Sigmoid colon (tissue), 7 donors: ENCODE measurements at regions of chr17 and their contacts with region 1.

Region 1: DNA sequence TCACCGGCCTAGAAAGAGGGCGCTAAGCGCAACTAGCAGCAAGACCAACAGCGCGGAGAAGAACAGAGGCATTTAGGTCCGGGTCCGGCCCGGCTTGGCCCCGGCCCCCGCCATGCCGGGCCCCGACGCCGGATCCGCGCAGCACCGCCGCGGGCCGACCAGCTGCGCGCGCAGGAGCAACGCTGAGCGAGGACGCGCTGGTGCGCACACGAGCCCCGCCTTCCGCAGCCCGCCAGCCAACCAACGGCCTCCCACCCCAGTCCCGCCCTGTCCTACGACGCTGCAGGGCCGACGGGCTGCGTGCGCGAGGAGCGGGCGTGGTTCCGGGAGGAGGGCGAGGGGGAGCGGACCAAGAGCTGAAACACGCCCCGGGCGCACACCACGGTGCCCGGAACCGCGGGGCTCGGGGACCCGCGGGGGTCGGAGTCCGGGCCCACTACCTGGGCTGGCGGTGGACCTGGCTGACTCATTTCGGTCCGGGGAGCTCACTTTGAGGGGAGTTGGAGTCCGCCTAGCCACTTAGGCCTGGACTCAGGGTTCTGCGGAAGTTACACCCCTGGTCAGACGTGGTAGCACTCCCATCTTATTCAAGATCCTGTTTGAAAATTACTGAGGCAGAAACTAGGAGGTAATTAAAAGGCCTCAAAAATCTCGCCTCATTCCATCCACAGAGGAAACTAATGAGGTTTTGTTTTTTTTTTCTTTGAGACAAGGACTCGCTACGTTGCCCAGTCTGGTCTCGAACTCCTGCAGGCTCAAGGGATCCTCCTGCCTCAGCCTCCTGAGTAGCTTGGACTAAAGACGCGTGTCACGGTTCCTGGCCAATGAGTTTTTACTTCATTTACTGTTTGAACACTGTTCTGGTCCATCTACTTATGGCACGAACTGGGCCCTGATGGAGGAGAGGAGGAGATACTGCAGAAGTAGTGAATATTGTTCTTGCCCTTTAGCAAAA is at the start of gene BLTP2:
- DNase-seq: peak; percentile 98
- H3K4me3 ChIP-seq: peak within 1 kb of the TSS; percentile 94 to 99 (median 98)
- H3K27ac ChIP-seq: peak within 1 kb of the TSS; percentile 91 to 97 (median 95)
- H3K4me1 ChIP-seq: peaks cover 0 to 40% (median 32%) of the 10 kb centered on the region in 4 donors
- H3K27me3 ChIP-seq: no peaks in the 10 kb centered on the region
- CTCF ChIP-seq: peak in 1 of 4 experiments; percentile 37
- EP300 ChIP-seq: no peak
- POLR2A ChIP-seq: peak; percentile 68 to 88
- total RNA-seq, gene BLTP2: 71.0 to 84.5 (median 80.3) TPM

Region 2: GRCh38 chr17:28240991-28241340 is 404.3 kb before region 1 on chr17:
- intact Hi-C with region 1: no loop called
- DNase-seq: no peak
- H3K4me3 ChIP-seq: no peak overlapping the region
- H3K27ac ChIP-seq: no peak overlapping the region
- H3K4me1 ChIP-seq: no peaks in the 10 kb centered on the region
- H3K27me3 ChIP-seq: no peaks in the 10 kb centered on the region
- CTCF ChIP-seq: no peak
- EP300 ChIP-seq: no peak
- POLR2A ChIP-seq: no peak

Region 3: DNA sequence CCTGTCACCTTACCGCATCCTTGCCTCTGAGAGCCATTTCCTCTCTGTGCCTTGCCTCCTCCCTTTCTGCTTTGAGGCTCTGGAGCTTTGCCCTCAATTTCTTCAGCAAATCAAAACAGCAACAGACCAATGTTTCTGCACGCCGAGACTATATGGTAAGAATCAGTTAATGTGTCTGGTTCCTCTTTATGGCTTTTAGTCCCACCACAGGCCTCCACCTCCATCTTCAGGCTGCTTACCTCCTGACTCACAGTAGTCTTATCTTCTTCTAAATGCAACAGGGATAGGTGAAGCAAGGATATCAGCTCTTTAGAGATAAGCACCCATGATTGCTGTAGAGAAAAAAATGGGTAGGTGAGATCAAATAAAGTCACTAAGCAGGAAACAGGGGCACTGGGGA is 59.4 kb before region 1 on chr17:
- intact Hi-C with region 1: no loop called
- DNase-seq: no peak
- H3K4me3 ChIP-seq: no peak overlapping the region
- H3K27ac ChIP-seq: no peak overlapping the region
- H3K4me1 ChIP-seq: no peaks in the 10 kb centered on the region
- H3K27me3 ChIP-seq: no peaks in the 10 kb centered on the region
- CTCF ChIP-seq: no peak
- EP300 ChIP-seq: no peak
- POLR2A ChIP-seq: no peak

Region 4: GRCh38 chr17:28598799-28599310 is 46.4 kb before region 1 on chr17 and contains the start of gene SPAG5:
- intact Hi-C with region 1: no loop called
- DNase-seq: peak; percentile 97
- H3K4me3 ChIP-seq: peak within 1 kb of the TSS; percentile 52 to 63 (median 55)
- H3K27ac ChIP-seq: peak within 1 kb of the TSS; percentile 85 to 92 (median 89)
- H3K4me1 ChIP-seq: peaks cover 2 to 19% (median 14%) of the 10 kb centered on the region in 4 donors
- H3K27me3 ChIP-seq: no peaks in the 10 kb centered on the region
- CTCF ChIP-seq: no peak
- EP300 ChIP-seq: no peak
- POLR2A ChIP-seq: peak; percentile 84 to 86
- total RNA-seq, gene SPAG5: 0.33 to 3.9 (median 1.6) TPM

Region 5: GRCh38 chr17:28661635-28662537 is 16.6 kb after region 1 on chr17 and contains the starts of genes SDF2 and SUPT6H:
- intact Hi-C with region 1: loop called (anchors 2 kb)
- DNase-seq: peak; percentile 95
- H3K4me3 ChIP-seq: peak within 1 kb of the TSS; percentile 62 to 78 (median 74)
- H3K27ac ChIP-seq: peak within 1 kb of the TSS; percentile 93 to 96 (median 94)
- H3K4me1 ChIP-seq: peaks cover 0 to 39% (median 34%) of the 10 kb centered on the region in 4 donors
- H3K27me3 ChIP-seq: no peaks in the 10 kb centered on the region
- CTCF ChIP-seq: no peak
- EP300 ChIP-seq: no peak
- POLR2A ChIP-seq: peak; percentile 90 to 94
- total RNA-seq, gene SDF2: 41.8 to 61.8 (median 48.1) TPM
- total RNA-seq, gene SUPT6H: 49.0 to 75.6 (median 58.9) TPM

Region 6: GRCh38 chr17:28710861-28711722 is 65.8 kb after region 1 on chr17:
- intact Hi-C with region 1: loop called (anchors 5 kb)
- DNase-seq: peak; percentile 94
- H3K4me3 ChIP-seq: peak overlapping the region; percentile 54 to 62 (median 60)
- H3K27ac ChIP-seq: peak overlapping the region; percentile 92 to 94 (median 92)
- H3K4me1 ChIP-seq: peaks cover 0 to 27% (median 20%) of the 10 kb centered on the region in 4 donors
- H3K27me3 ChIP-seq: no peaks in the 10 kb centered on the region
- CTCF ChIP-seq: no peak
- EP300 ChIP-seq: no peak
- POLR2A ChIP-seq: peak; percentile 65 to 81